A673 (cell line): ENCODE measurements at regions of chr4 and their contacts with region 1.

Region 1: GRCh38 chr4:81466841-81467671 is 4.7 kb downstream of the RASGEF1B start:
- DNase-seq: peak; percentile 71
- H3K4me3 ChIP-seq: no peak overlapping the region
- H3K27ac ChIP-seq: no peak overlapping the region
- H3K4me1 ChIP-seq: peaks cover 25% of the 10 kb centered on the region
- H3K27me3 ChIP-seq: no peaks in the 10 kb centered on the region
- CTCF ChIP-seq: peak; percentile 71

Region 2: DNA sequence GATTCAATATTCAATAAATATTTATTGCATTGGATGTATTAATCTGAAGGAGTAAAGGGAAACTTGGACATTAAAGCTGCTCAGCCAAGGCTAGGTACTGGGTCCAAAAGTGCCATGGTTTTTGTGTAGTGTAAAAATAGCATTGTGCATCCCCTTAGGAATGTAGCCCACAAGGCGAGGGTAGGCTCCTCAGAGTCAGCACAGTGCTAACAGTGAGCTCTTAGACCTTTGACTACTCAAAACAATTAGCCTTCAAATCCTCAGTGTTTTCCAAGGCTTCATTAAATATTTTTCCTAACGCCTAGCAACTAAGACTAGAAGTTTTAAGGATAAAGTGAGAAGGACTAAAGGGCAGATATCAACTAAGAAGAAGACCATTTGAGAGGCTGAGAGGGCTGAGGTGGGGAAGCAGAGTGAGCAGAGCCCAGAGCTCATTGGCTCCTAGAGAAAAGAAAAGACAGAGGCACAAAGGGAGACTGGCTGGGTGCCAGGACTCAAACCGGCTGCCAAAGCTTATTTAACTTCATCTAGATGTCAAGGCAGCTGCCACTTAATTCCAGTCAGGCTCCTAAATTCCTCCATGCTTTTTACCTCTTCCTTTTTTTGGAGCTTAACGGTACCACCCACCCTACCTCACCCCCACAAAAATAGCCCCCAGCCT is 269.1 kb before region 1 on chr4:
- CTCF ChIA-PET with region 1: no interaction called
- POLR2A ChIA-PET with region 1: no interaction called
- intact Hi-C with region 1: no loop called
- DNase-seq: peak; percentile 3
- H3K4me3 ChIP-seq: no peak overlapping the region
- H3K27ac ChIP-seq: no peak overlapping the region
- H3K4me1 ChIP-seq: no peaks in the 10 kb centered on the region
- H3K27me3 ChIP-seq: no peaks in the 10 kb centered on the region
- CTCF ChIP-seq: no peak

Region 3: GRCh38 chr4:81523672-81524327 is 56.7 kb after region 1 on chr4:
- CTCF ChIA-PET with region 1: no interaction called
- POLR2A ChIA-PET with region 1: no interaction called
- intact Hi-C with region 1: no loop called
- DNase-seq: no peak
- H3K4me3 ChIP-seq: no peak overlapping the region
- H3K27ac ChIP-seq: no peak overlapping the region
- H3K4me1 ChIP-seq: no peaks in the 10 kb centered on the region
- H3K27me3 ChIP-seq: no peaks in the 10 kb centered on the region
- CTCF ChIP-seq: no peak

Region 4: GRCh38 chr4:81844717-81845116 is 377.7 kb after region 1 on chr4:
- CTCF ChIA-PET with region 1: interaction called, 6 read pairs
- POLR2A ChIA-PET with region 1: no interaction called
- intact Hi-C with region 1: loop called (anchors 2 kb)
- DNase-seq: peak; percentile 75
- H3K4me3 ChIP-seq: no peak overlapping the region
- H3K27ac ChIP-seq: no peak overlapping the region
- H3K4me1 ChIP-seq: peaks cover 6% of the 10 kb centered on the region
- H3K27me3 ChIP-seq: no peaks in the 10 kb centered on the region
- CTCF ChIP-seq: peak; percentile 65

Region 5: GRCh38 chr4:81921751-81922159 is 454.7 kb after region 1 on chr4:
- CTCF ChIA-PET with region 1: no interaction called
- POLR2A ChIA-PET with region 1: no interaction called
- intact Hi-C with region 1: loop called (anchors 5 kb)
- DNase-seq: peak; percentile 61
- H3K4me3 ChIP-seq: no peak overlapping the region
- H3K27ac ChIP-seq: no peak overlapping the region
- H3K4me1 ChIP-seq: no peaks in the 10 kb centered on the region
- H3K27me3 ChIP-seq: no peaks in the 10 kb centered on the region
- CTCF ChIP-seq: no peak

Region 6: DNA sequence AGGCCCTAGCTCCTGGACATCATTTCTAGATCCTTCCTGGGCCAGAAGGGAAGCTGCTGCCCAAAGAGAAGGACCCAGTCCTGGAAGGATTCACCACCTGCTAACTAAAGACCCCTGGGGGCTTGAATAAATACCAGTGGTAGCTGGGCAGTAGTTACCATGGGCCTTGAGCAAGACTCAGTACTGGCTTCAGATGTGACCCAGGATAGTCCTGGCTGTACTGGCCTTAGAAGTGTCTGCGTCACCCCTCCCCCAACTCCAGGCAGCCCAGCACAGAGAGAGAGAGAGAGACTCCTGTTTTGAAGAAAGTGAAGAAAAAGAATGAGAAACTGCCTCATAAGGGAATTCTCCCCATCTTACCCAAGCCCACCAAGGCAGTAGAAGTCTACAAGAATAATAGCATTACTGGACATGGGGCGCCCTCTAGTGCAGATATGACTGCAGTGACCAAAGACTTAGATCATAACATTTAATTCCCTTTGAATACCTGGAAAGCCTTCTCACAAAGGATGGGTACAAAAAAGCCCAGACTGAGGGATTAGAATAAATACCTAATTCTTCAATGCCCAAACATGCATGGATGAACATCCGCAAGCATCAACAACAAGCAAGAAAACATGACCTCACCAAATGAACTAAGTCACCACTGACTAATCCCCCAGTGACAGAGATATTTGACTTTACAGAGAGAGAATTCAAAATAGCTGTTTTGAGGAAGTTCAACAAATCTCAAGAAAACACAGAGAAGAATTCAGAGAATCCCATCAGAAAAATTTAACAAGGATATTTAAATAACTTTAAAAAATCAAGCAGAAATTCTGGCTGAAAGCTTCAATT is 735.0 kb after region 1 on chr4:
- CTCF ChIA-PET with region 1: interaction called, 3 read pairs
- POLR2A ChIA-PET with region 1: no interaction called
- intact Hi-C with region 1: loop called (anchors 5 kb)
- DNase-seq: peak; percentile 80
- H3K4me3 ChIP-seq: no peak overlapping the region
- H3K27ac ChIP-seq: no peak overlapping the region
- H3K4me1 ChIP-seq: no peaks in the 10 kb centered on the region
- H3K27me3 ChIP-seq: no peaks in the 10 kb centered on the region
- CTCF ChIP-seq: peak; percentile 70

Region 7: GRCh38 chr4:82268050-82268825 is 801.2 kb after region 1 on chr4:
- CTCF ChIA-PET with region 1: interaction called, 6 read pairs
- POLR2A ChIA-PET with region 1: no interaction called
- intact Hi-C with region 1: loop called (anchors 2 kb)
- DNase-seq: peak; percentile 80
- H3K4me3 ChIP-seq: no peak overlapping the region
- H3K27ac ChIP-seq: peak overlapping the region; percentile 70
- H3K4me1 ChIP-seq: peaks cover 11% of the 10 kb centered on the region
- H3K27me3 ChIP-seq: no peaks in the 10 kb centered on the region
- CTCF ChIP-seq: peak; percentile 74